Pancreas (tissue), 10 donors: ENCODE measurements at regions of chr19 and their contacts with region 1.

Region 1: DNA sequence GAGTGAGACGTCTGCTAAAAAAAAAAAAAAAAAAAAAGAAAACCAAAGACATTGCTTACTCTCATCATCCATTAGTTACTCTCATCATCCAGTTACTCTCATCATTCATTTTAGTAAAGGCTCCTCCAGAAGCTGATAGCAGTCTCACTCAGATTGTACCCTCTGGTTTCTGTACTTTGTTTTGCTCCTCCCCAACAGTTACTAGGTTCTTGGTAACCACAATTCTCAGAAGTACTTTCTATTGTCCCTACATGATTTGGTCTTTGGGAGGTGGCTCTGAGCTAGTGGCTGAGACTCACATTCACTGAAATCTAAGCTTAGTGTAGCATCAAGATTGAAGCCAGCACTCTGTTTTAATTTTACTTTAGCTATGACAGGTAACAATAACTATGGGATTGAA is 14.3 kb downstream of the ERICH4 start:
- DNase-seq: no peak
- ATAC-seq: no peak
- H3K4me3 ChIP-seq: no peak overlapping the region
- H3K27ac ChIP-seq: no peak overlapping the region
- H3K4me1 ChIP-seq: peaks cover 0 to 3% (median 0%) of the 10 kb centered on the region in 3 donors
- H3K27me3 ChIP-seq: peaks cover 0 to 9% (median 0%) of the 10 kb centered on the region in 4 donors
- CTCF ChIP-seq: no peak

Region 2: GRCh38 chr19:41521931-41522555 is 64.8 kb after region 1 on chr19:
- intact Hi-C with region 1: loop called in 1 of 3 experiments (anchors 10 kb)
- DNase-seq: peak in 1 of 6 donors; percentile 66
- ATAC-seq: peak in 3 of 4 donors; percentile 56 to 84 (median 60)
- H3K4me3 ChIP-seq: peak overlapping the region in 2 of 4 donors; percentile 17 to 36
- H3K27ac ChIP-seq: peak overlapping the region in 1 of 4 donors; percentile 42
- H3K4me1 ChIP-seq: no peaks in the 10 kb centered on the region
- H3K27me3 ChIP-seq: peaks cover 0 to 44% (median 4%) of the 10 kb centered on the region in 4 donors
- CTCF ChIP-seq: no peak